ENCODE measurements at regions of chr11 and their contacts with region 1.

Region 1: DNA sequence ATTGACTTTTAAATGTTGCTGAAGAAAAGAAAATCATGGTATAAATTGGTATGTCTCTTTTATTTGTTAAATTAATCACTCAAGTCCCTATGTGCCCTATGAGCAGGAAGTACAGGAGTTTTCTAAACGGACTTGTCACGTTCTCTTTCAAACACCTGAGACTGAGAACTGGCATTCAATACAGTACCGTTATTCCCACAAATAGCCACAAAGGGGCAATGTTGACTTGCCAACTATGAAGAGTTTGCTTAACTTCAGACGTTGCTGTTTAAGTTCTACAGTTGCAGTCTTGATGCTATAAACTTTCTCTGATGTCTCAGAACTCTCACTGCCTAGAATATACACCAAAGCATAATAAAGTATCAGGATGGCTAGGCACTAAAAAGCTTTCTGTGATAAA is 7.6 kb downstream of the OR56A1 start:
- DNase-seq: no peak
- ATAC-seq: peak; percentile 84

Region 2: GRCh38 chr11:6315811-6316425 is 293.0 kb after region 1 on chr11:
- intact Hi-C with region 1: loop called in 1 of 2 experiments (anchors 10 kb)
- DNase-seq: peak; percentile 41 to 53
- ATAC-seq: peak; percentile 53

Region 3: DNA sequence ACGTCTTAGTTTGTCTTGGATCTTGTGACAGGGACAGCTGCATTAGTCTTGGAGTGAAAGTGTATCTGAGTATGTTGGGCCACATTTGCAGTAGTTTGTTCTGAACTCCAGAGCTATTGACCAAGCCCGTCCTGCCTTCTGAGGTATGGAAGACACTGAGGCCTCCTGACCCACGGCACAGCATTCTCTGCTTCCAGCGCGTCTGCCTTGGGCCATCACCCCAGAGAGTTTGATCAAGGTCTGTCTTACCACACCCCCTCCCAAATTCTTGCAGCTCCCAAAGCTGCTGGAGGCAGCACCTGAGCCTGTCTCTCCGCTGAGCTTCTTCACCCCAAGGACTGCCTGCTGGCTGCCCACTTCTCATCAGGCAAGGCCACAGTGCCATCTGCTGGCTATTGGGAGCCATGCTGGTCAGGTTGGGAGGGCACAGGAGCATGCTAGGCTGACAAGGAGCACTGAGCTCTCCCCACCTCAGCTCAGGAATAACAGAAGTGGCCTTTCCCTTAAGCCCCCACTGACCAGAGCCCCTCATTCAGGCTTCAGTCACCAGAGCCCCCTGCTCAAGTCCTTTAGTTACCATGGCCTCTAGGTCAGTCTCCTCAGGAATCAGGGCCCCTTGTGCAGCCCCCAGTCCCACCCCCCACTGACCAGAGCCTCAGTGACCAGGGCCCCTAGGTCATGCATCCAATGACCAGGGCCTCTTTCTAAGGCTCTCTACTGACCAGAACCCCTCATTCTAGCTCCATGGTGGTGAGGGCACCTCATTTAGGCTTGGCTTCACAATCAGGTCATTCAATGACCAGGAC is 340.1 kb after region 1 on chr11:
- intact Hi-C with region 1: loop called in 1 of 2 experiments (anchors 5 kb)
- DNase-seq: peak; percentile 63 to 76
- ATAC-seq: peak; percentile 91

Measured in left colon (tissue), 2 donors.